ENCODE measurements at regions of chr10 and their contacts with region 1.

Region 1: GRCh38 chr10:114334301-114334700 is 70.0 kb downstream of the AFAP1L2 start:
- DNase-seq: no peak

Region 2: GRCh38 chr10:114403541-114404161 is 69.3 kb after region 1 on chr10:
- intact Hi-C with region 1: loop called (anchors 5 kb)
- DNase-seq: no peak

Measured in cardiac septum (tissue), 1 donor.